Caco-2 (cell line): ENCODE measurements at regions of chr5 and their contacts with region 1.

Region 1: DNA sequence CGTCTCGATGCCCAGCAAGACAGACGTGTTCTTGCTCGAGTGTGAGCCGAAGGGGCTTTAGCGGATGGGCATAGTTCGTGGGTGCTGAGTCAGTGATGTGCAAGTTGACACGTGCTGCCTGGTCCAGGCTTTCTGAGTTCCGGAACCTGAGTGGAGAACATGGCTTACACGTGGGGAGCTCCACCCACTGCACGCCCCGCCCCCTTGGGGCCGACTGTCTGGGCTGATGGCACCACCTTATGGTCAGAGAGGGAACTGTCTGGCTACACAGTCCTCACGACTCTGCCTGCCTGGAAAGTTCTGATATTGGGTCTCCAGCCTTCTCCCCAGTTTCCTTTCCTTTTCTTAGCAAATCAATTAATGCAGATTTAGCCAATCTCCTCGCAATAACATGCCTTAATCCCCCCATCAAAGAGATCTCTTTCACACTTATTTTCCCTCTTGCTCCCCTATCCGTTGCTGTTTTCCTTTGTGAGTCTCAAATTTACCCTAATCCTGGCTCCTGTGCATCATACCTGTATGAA is 3.8 kb upstream of the STC2 start:
- DNase-seq: peak; percentile 90 to 93
- H3K4me3 ChIP-seq: no peak overlapping the region
- H3K4me3 Mint-ChIP-seq: peak overlapping the region; percentile 91
- H3K27ac Mint-ChIP-seq: peak overlapping the region; percentile 97
- H3K4me1 ChIP-seq: peaks cover 19% of the 10 kb centered on the region
- H3K4me1 Mint-ChIP-seq: peaks cover 15% of the 10 kb centered on the region
- H3K27me3 ChIP-seq: no peaks in the 10 kb centered on the region
- H3K27me3 Mint-ChIP-seq: no peaks in the 10 kb centered on the region
- CTCF ChIP-seq: peak; percentile 91 to 95

Region 2: DNA sequence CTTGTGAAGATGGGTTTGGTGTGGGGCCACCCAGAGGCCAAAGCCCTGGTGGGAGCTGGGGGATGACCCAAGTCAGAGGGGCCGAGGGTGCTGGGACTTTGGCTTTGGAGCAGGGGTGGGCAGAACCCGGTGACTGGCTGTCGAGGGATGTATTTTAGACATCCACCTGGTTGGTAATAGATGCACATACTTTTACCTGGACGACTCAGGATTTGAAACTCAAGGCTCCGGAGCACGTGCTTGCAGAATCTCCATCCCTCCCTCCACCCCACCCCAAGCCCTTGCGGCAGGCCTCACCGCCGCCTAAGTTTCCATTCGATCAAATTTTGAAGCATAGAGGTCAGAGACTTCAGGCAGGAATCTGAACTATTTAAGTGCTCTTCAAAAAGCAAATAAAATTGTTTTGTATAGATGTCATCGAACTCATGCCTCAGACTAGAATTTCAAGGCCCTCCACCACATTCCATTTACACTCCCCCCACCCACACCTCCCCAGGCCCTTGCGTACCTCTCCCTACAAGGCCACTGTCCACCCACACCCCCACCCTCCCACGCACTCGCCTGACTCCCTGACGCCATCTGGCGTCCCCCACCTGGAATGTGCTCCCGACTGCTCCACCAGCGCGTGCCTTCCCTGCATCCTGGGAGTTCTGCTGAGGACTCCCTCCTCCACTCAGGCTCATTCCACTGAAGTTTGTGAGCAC is 429.4 kb before region 1 on chr5:
- CTCF ChIA-PET with region 1: interaction called, 3 read pairs
- POLR2A ChIA-PET with region 1: interaction called, 11 read pairs
- intact Hi-C with region 1: no loop called
- DNase-seq: peak; percentile 91 to 97
- H3K4me3 ChIP-seq: no peak overlapping the region
- H3K4me3 Mint-ChIP-seq: peak overlapping the region; percentile 52
- H3K27ac Mint-ChIP-seq: peak overlapping the region; percentile 91
- H3K4me1 ChIP-seq: peaks cover 70% of the 10 kb centered on the region
- H3K4me1 Mint-ChIP-seq: peaks cover 50% of the 10 kb centered on the region
- H3K27me3 ChIP-seq: no peaks in the 10 kb centered on the region
- H3K27me3 Mint-ChIP-seq: no peaks in the 10 kb centered on the region
- CTCF ChIP-seq: peak; percentile 56 to 95

Region 3: DNA sequence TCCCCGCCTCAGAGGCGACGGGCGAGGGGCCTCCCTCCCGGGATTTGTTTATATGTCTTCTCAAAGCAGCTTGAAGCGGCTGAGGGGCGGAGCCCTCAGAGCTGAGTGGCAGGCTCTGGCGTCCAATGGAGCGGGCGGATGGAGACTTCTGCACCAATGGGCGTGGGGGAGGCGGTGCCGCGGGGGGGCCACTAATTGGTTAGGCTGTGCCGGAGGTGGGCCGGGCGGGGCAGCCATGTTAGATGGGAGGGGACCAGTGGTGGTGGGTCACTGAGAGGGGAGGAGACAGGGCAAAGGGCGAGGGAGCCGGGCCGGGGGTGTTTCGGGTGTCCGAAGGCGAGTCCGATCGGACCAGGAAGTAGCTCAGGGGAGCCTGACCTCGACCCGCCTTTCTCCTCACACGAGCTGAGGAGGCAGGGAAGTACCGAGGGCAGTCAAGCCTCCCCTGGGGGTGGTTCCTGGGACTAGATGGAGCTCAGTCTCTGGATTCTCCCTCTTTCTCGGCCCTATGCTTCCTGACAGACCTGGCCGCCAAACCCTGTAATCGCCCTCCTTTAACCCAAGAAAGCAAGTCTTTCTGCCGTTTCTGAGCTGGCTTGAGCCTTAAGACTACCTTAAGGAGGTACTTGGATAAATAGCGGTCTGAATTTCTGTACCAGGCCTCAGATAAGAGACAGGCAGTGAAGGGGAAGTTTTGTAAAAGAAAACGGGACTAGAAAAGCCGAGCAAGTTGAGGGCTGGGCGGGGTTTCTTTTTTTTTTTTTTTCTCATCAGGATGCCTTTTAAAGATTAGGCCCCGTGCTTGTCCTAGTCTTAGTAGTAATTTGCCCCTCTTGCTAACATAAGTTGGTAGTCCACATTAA is 274.7 kb before region 1 on chr5:
- CTCF ChIA-PET with region 1: no interaction called
- POLR2A ChIA-PET with region 1: interaction called, 6 read pairs
- intact Hi-C with region 1: loop called (anchors 1 kb)
- DNase-seq: peak; percentile 100
- H3K4me3 ChIP-seq: peak overlapping the region; percentile 95
- H3K4me3 Mint-ChIP-seq: peak overlapping the region; percentile 94
- H3K27ac Mint-ChIP-seq: peak overlapping the region; percentile 90
- H3K4me1 ChIP-seq: peaks cover 22% of the 10 kb centered on the region
- H3K4me1 Mint-ChIP-seq: peaks cover 15% of the 10 kb centered on the region
- H3K27me3 ChIP-seq: no peaks in the 10 kb centered on the region
- H3K27me3 Mint-ChIP-seq: no peaks in the 10 kb centered on the region
- CTCF ChIP-seq: peak in 1 of 2 experiments; percentile 30

Region 4: GRCh38 chr5:173165177-173166016 is 166.6 kb before region 1 on chr5:
- CTCF ChIA-PET with region 1: interaction called, 3 read pairs
- POLR2A ChIA-PET with region 1: no interaction called
- intact Hi-C with region 1: loop called (anchors 1 kb)
- DNase-seq: no peak
- H3K4me3 ChIP-seq: no peak overlapping the region
- H3K4me3 Mint-ChIP-seq: no peak overlapping the region
- H3K27ac Mint-ChIP-seq: no peak overlapping the region
- H3K4me1 ChIP-seq: no peaks in the 10 kb centered on the region
- H3K4me1 Mint-ChIP-seq: no peaks in the 10 kb centered on the region
- H3K27me3 ChIP-seq: no peaks in the 10 kb centered on the region
- H3K27me3 Mint-ChIP-seq: no peaks in the 10 kb centered on the region
- CTCF ChIP-seq: no peak

Region 5: GRCh38 chr5:173238312-173239232 is 93.4 kb before region 1 on chr5:
- CTCF ChIA-PET with region 1: no interaction called
- POLR2A ChIA-PET with region 1: no interaction called
- intact Hi-C with region 1: no loop called
- DNase-seq: peak in 1 of 2 experiments; percentile 16
- H3K4me3 ChIP-seq: peak overlapping the region; percentile 36
- H3K4me3 Mint-ChIP-seq: peak overlapping the region; percentile 78
- H3K27ac Mint-ChIP-seq: no peak overlapping the region
- H3K4me1 ChIP-seq: 0 out of 2 replicates have a peak, but pooled peaks cover 3% of the 10 kb centered on the region
- H3K4me1 Mint-ChIP-seq: no peaks in the 10 kb centered on the region
- H3K27me3 ChIP-seq: no peaks in the 10 kb centered on the region; the same call in 1 of the 2 replicates
- H3K27me3 Mint-ChIP-seq: peaks cover 25% of the 10 kb centered on the region
- CTCF ChIP-seq: no peak

Region 6: DNA sequence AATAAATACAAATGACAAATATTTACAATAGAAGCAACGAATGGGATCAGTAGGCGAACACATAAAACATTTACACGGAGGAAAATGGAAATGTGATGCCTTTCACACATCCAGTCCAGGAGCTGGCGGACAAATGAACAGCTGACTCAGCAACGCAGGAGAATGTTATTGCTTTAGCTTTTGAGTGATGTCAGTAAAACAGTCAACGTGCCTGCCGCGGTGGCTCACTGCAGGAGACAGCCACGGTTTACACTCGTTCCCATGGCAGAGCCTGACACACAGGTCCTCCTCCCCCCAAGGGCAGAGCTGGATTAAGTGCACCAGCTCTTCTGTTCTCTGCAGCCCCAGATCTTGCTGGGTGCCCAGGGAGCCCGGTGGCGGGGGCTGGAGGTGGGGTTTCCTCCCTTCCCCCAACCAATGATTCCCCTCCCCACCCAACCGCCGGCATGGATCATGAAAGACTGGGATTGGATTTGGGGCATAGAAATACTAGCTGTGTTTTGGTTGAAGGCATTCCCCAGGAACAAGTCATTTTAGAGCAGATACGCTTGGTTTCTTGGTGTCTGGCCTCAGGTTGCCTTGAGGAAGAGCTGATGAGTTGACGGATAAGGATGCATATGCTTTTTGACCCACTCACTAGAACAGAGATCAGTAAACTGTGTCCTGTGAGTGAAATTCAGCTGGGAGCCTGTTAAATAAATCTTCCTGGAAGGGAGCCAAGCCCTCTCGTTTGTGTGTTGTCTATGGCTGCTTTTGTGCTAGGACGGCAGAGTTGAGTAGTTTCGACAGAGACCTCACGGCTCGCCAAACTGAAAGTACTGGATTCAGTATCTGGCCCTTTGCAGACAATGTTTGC is 16.3 kb before region 1 on chr5:
- CTCF ChIA-PET with region 1: interaction called, 7 read pairs
- POLR2A ChIA-PET with region 1: interaction called, 72 read pairs
- intact Hi-C with region 1: loop called (anchors 2 kb)
- DNase-seq: peak; percentile 24 to 61
- H3K4me3 ChIP-seq: no peak overlapping the region
- H3K4me3 Mint-ChIP-seq: no peak overlapping the region
- H3K27ac Mint-ChIP-seq: peak overlapping the region; percentile 89
- H3K4me1 ChIP-seq: no peaks in the 10 kb centered on the region
- H3K4me1 Mint-ChIP-seq: peaks cover 27% of the 10 kb centered on the region
- H3K27me3 ChIP-seq: no peaks in the 10 kb centered on the region
- H3K27me3 Mint-ChIP-seq: no peaks in the 10 kb centered on the region
- CTCF ChIP-seq: no peak

Region 7: DNA sequence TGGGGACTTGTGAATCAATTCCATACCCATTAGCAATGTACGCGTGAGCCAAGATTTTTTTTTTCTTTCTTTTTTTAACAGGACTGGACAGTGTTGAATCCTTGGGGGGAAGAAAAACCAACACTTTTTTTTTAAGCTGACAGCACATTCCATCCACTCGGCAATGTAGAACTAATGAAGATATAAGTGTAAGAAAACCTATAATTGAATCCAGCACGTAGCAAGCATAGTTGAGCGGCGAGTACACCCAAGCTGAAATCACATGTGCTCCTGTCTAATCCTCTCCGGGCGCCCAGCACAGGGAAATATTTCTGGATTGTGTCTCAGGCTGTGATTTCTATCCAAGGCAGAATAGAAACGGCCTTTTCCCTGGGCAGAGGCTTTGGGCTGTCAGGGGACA is 166.3 kb after region 1 on chr5:
- CTCF ChIA-PET with region 1: no interaction called
- POLR2A ChIA-PET with region 1: no interaction called
- intact Hi-C with region 1: no loop called
- DNase-seq: no peak
- H3K4me3 ChIP-seq: no peak overlapping the region
- H3K4me3 Mint-ChIP-seq: no peak overlapping the region
- H3K27ac Mint-ChIP-seq: peak overlapping the region; percentile 59
- H3K4me1 ChIP-seq: peaks cover 25% of the 10 kb centered on the region
- H3K4me1 Mint-ChIP-seq: peaks cover 21% of the 10 kb centered on the region
- H3K27me3 ChIP-seq: no peaks in the 10 kb centered on the region
- H3K27me3 Mint-ChIP-seq: no peaks in the 10 kb centered on the region
- CTCF ChIP-seq: no peak

Region 8: DNA sequence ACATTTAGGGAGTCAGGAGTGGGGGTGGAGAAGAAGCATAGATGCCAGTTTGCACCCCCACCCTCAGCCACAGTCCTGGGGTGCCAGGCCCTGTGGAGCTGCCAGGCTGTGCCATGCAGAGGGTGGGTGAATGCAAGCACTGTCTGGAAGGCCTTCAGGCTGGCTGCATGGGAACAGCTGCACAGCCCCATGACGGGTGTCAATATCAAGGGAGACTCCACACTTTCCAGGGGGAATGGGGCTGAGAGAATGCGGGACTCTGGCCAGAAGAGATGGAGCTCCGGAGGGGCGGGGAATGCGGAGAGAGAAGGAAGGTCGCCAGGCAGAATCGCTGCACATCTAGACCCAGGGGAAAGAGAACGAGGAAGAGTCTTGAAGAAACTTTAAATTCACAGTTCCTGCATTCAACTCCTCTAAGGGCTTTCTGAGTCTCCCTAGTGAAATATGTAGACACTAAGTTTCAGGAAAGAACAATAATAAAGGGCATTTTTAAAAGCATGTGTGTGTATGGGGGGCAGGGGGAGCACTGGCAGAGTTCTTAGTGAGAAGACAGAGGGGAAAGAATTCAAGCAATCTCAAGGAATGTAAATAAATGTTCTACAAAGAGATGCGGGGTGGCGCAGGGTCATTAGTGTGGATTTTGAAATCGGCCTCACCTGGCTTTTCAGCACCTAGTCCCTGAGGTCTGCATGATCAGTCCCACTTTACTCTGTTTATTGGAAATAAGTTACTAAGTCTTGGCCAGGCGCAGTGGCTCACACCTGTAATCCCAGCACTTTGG is 225.3 kb after region 1 on chr5:
- CTCF ChIA-PET with region 1: interaction called, 3 read pairs
- POLR2A ChIA-PET with region 1: no interaction called
- intact Hi-C with region 1: loop called (anchors 2 kb)
- DNase-seq: peak; percentile 64 to 75
- H3K4me3 ChIP-seq: no peak overlapping the region
- H3K4me3 Mint-ChIP-seq: peak overlapping the region; percentile 3
- H3K27ac Mint-ChIP-seq: peak overlapping the region; percentile 24
- H3K4me1 ChIP-seq: peaks cover 19% of the 10 kb centered on the region
- H3K4me1 Mint-ChIP-seq: peaks cover 2% of the 10 kb centered on the region
- H3K27me3 ChIP-seq: no peaks in the 10 kb centered on the region; the same call in 1 of the 2 replicates
- H3K27me3 Mint-ChIP-seq: no peaks in the 10 kb centered on the region
- CTCF ChIP-seq: no peak